GM13976 (cell line): ENCODE measurements at regions of chr18 and their contacts with region 1.

Region 1: GRCh38 chr18:6219116-6219717 is 195.5 kb downstream of the L3MBTL4 start:
- DNase-seq: peak; percentile 33
- CTCF ChIP-seq: peak; percentile 72

Region 2: GRCh38 chr18:5890331-5891183 is 328.7 kb before region 1 on chr18:
- in situ Hi-C with region 1: loop called (anchors 10 kb)
- DNase-seq: peak; percentile 88
- CTCF ChIP-seq: peak; percentile 82

Region 3: GRCh38 chr18:6161549-6161948 is 57.7 kb before region 1 on chr18:
- in situ Hi-C with region 1: no loop called
- DNase-seq: peak; percentile 37
- CTCF ChIP-seq: no peak

Region 4: DNA sequence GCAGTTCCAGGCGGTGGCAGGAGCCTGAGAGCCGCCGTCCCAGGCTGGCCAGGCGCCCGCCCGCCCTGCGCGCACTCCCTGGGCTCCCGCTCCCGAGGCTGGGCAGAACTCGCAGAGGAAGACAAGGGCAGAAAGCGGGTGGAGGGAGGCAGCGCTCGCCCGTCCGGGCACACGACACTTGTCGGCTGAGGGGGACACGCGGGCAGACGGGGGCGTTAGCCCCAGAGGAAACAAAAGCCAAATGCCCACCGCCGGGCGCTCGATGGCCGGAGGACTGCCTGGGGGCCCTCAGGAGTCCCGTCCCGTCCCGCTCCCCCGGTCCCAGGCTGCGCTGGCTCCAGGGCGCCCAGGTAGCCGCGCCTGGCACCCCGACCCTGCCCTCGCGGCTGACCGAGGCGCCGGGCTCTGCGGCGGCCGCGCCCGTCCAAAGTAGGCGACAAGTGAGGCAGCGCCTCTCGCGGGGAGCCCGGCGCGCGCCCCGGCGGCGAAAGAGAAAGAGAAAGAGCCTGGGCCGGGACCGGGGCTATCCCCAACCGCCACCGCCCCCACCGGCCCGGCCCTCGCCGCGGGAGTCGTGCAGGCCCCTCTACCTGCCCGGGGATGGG is 195.0 kb after region 1 on chr18:
- in situ Hi-C with region 1: no loop called
- DNase-seq: peak; percentile 92
- CTCF ChIP-seq: peak; percentile 12